Dendritic cell treated with granulocyte-macrophage colony-stimulating factor and Interleukin-4, amounts not matched to agents 40 ng/mL and 50 ng/mL, for 4 days (primary cell): ENCODE measurements at regions of chr10 and their contacts with region 1.

Region 1: GRCh38 chr10:75187961-75188426 is 22.6 kb upstream of the VDAC2 start:
- H3K4me3 Mint-ChIP-seq: no peak overlapping the region
- H3K27ac Mint-ChIP-seq: no peak overlapping the region
- H3K4me1 Mint-ChIP-seq: peaks cover 15% of the 10 kb centered on the region
- H3K27me3 Mint-ChIP-seq: no peaks in the 10 kb centered on the region

Region 2: GRCh38 chr10:74977913-74978847 is 209.8 kb before region 1 on chr10:
- intact Hi-C with region 1: no loop called
- H3K4me3 Mint-ChIP-seq: no peak overlapping the region
- H3K27ac Mint-ChIP-seq: no peak overlapping the region
- H3K4me1 Mint-ChIP-seq: peaks cover 6% of the 10 kb centered on the region
- H3K27me3 Mint-ChIP-seq: no peaks in the 10 kb centered on the region

Region 3: DNA sequence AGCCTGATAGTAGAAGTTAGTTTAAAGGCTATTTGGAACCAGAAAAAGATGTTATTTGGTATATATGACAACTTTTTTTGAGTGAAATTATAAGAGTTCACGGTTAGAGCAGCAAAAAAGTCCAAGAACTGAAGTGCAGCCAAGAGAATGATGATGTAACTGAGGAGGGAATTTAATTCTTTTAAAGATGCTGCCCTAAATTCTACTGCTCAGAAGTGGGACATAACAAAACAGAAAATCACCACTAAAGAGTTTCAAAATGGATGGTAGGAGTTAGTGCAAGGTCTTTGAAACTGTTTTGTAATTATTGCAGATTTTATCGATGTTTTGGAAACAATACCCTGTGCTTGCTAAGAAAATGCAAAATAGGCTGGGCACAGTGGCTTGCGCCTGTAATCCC is 70.0 kb before region 1 on chr10:
- intact Hi-C with region 1: no loop called
- H3K4me3 Mint-ChIP-seq: no peak overlapping the region
- H3K27ac Mint-ChIP-seq: no peak overlapping the region
- H3K4me1 Mint-ChIP-seq: peaks cover 29% of the 10 kb centered on the region
- H3K27me3 Mint-ChIP-seq: no peaks in the 10 kb centered on the region

Region 4: GRCh38 chr10:75235375-75236177 is 47.6 kb after region 1 on chr10 and contains the start of gene COMTD1:
- intact Hi-C with region 1: loop called (anchors 2 kb)
- H3K4me3 Mint-ChIP-seq: peak within 1 kb of the TSS; percentile 83
- H3K27ac Mint-ChIP-seq: peak within 1 kb of the TSS; percentile 72
- H3K4me1 Mint-ChIP-seq: peaks cover 21% of the 10 kb centered on the region
- H3K27me3 Mint-ChIP-seq: no peaks in the 10 kb centered on the region